ENCODE measurements at regions of chr7 and their contacts with region 1.

Region 1: GRCh38 chr7:92691578-92691977 is 101.4 kb upstream of the FAM133B start:
- DNase-seq: peak; percentile 77
- H3K4me3 ChIP-seq: no peak overlapping the region
- H3K27ac ChIP-seq: peak overlapping the region; percentile 19
- H3K4me1 ChIP-seq: peaks cover 18% of the 10 kb centered on the region
- H3K27me3 ChIP-seq: no peaks in the 10 kb centered on the region
- CTCF ChIP-seq: peak; percentile 32 to 34
- POLR2A ChIP-seq: no peak

Region 2: GRCh38 chr7:92528188-92528957 is 163.2 kb before region 1 on chr7 and contains the starts of genes PEX1 and RBM48:
- CTCF ChIA-PET with region 1: no interaction called
- POLR2A ChIA-PET with region 1: no interaction called
- dilution Hi-C with region 1: no loop called
- intact Hi-C with region 1: no loop called
- DNase-seq: peak; percentile 100
- H3K4me3 ChIP-seq: peak within 1 kb of the TSS; percentile 88 to 100 (median 95)
- H3K27ac ChIP-seq: peak within 1 kb of the TSS; percentile 91
- H3K4me1 ChIP-seq: peaks cover 15% of the 10 kb centered on the region
- H3K27me3 ChIP-seq: no peaks in the 10 kb centered on the region
- CTCF ChIP-seq: peak; percentile 34 to 50
- POLR2A ChIP-seq: peak; percentile 70
- total RNA-seq, gene PEX1: 10.7 and 11.7 TPM in 2 replicates
- total RNA-seq, gene RBM48: 12.0 and 13.1 TPM in 2 replicates

Region 3: DNA sequence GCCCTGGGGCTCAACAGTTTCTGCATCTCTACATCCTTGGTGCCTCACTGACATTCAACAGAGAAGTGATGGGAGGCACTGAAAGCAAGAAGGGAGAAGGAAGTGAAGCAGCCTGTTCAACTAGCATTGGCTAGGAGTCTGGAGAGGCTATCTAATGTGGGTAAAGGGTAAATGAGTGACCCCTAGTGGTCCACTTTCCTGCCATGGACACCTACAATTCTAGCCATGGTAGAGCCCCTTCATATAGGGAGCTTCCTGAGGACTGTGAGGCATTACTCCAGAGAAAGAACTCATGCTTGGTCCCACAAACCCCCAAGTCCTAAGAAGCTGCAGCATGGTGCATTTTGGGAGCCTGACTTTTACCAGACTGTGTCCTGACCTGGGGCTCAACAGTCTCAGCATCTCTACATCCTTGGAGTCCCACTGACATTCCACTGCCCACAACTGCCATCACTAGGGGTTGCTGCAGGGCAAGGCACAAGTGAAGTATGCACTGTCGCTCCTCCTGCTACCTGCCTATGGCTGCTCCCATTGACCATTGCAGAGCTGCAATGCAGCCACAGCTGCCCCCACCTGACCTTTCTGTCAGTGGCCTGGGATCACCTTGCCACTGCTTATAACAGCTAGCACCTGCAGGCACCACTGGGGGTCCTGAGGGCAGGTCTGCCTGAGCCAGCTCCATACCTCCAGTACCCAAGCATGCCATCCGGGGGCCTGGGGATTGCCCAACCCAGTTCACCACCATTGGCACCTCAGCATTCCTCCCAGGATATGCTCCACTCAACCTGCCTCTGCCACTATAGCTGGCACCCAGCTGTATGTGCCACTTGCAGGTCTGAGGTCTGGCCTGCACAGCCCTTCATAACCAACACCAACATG is 188.9 kb after region 1 on chr7:
- CTCF ChIA-PET with region 1: no interaction called
- POLR2A ChIA-PET with region 1: no interaction called
- dilution Hi-C with region 1: no loop called
- intact Hi-C with region 1: loop called (anchors 1 kb)
- DNase-seq: peak; percentile 20
- H3K4me3 ChIP-seq: no peak overlapping the region
- H3K27ac ChIP-seq: no peak overlapping the region
- H3K4me1 ChIP-seq: no peaks in the 10 kb centered on the region
- H3K27me3 ChIP-seq: no peaks in the 10 kb centered on the region
- CTCF ChIP-seq: peak in 1 of 2 donors; percentile 16
- POLR2A ChIP-seq: no peak

Region 4: DNA sequence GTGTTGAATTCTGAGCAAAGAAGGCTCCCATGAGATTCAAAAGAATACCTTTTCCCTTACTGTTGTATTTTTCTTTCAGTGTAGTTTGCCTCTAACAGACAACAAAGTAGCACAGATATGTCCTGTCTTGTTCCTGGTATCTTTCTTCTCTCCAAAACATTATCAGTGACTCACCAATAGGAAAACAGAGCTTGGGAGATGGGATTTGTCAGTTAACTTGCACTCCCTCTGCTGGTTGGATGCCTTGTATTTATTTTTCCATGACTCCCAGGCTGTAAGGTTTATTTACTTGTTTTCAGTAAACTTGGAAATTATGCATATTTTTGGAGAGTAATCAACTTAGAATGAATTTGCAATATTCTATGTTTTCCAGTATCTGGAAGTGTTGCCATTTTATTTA is 296.5 kb after region 1 on chr7:
- CTCF ChIA-PET with region 1: no interaction called
- POLR2A ChIA-PET with region 1: no interaction called
- dilution Hi-C with region 1: no loop called
- intact Hi-C with region 1: loop called (anchors 2 kb)
- DNase-seq: peak; percentile 57
- H3K4me3 ChIP-seq: no peak overlapping the region
- H3K27ac ChIP-seq: no peak overlapping the region
- H3K4me1 ChIP-seq: no peaks in the 10 kb centered on the region
- H3K27me3 ChIP-seq: no peaks in the 10 kb centered on the region
- CTCF ChIP-seq: peak; percentile 26 to 33
- POLR2A ChIP-seq: no peak